ENCODE measurements at regions of chr1 and their contacts with region 1.

Region 1: DNA sequence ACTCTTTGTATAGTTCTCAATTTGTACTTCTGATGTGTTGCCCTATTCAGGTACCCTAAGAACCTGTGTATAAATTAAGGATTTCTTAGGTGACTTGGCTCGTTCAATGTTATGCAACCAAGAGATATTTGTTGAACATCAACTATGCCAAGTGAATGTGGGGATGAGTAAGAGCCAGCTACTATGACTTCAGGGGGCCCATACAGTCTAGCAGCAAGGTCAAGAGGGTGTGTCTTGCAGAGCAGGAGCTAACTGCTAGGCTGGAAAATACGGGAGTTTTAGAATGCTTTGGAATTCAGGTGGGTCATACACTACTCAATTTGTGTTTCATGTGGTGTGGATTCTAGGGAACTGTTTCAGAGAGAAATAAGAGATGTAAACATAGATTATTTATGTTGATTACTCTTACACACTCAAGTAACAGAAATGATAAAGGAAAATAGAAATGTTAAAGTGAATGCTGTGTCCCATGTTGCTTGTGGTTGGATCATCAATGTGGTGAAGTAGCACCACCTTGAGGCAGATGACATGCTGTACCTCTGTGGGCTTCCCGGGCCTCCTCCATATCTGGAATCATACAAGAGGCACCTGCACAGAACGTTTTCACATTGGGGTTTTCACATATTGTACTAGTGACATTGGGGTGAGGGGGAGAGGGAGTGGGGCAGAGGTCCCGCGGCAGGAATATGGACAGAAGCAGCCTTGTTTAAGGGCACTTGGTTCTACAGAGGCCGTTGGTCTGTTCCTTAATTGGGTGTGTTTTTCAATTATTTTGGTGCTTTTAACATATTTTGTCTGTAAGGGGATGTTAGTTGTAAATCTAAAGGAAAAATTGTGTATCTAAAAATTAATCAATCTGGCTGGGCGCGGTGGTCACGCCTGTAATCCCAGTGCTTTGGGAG is 12.4 kb downstream of the ARPC5 start:
- DNase-seq: no peak
- ATAC-seq: peak; percentile 94
- H3K4me3 ChIP-seq: no peak overlapping the region
- H3K27ac ChIP-seq: no peak overlapping the region
- H3K4me1 ChIP-seq: no peaks in the 10 kb centered on the region; the same call in 1 of the 2 replicates
- H3K27me3 ChIP-seq: no peaks in the 10 kb centered on the region
- CTCF ChIP-seq: peak; percentile 73 to 77 (median 77); a peak in 5 of 6 replicates
- EP300 ChIP-seq: no peak
- POLR2A ChIP-seq: peak; percentile 25; the same call in 1 of the 2 replicates
- RAD21 ChIP-seq: peak; percentile 86

Region 2: GRCh38 chr1:183281553-183282091 is 341.5 kb before region 1 on chr1:
- CTCF ChIA-PET with region 1: interaction called, 3 read pairs
- POLR2A ChIA-PET with region 1: interaction called, 3 read pairs
- RAD21 ChIA-PET with region 1: interaction called, 5 read pairs
- SMC1A ChIA-PET with region 1: no interaction called
- in situ Hi-C with region 1: no loop called
- intact Hi-C with region 1: loop called (anchors 1 kb)
- DNase-seq: peak; percentile 54
- ATAC-seq: peak; percentile 91
- H3K4me3 ChIP-seq: no peak overlapping the region
- H3K27ac ChIP-seq: no peak overlapping the region
- H3K4me1 ChIP-seq: peaks cover 3% of the 10 kb centered on the region; the same call in 1 of the 2 replicates
- H3K27me3 ChIP-seq: no peaks in the 10 kb centered on the region
- CTCF ChIP-seq: peak; percentile 85 to 93 (median 88)
- EP300 ChIP-seq: no peak
- POLR2A ChIP-seq: no peak
- RAD21 ChIP-seq: peak; percentile 88

Region 3: DNA sequence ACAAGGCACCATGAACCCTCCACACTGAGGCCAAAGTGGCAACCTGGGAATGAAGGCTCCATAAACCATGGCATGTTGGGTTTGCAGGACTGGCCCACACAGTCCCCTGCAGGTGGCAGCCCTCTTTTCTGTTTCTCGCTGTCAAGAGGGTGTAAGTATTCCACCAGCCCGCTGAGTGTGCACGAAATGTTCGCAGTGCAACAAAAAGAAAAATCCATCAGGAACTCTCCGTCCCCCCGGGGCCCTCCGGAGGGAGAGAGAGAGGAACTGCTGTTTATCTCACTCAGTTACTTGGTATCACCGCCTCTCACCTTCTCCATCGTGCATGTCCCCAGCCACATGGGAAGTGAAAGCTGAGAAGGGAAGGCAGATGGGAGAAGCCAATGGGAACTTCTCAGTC is 71.2 kb before region 1 on chr1:
- CTCF ChIA-PET with region 1: no interaction called
- POLR2A ChIA-PET with region 1: no interaction called
- RAD21 ChIA-PET with region 1: no interaction called
- SMC1A ChIA-PET with region 1: interaction called, 8 read pairs
- in situ Hi-C with region 1: no loop called
- intact Hi-C with region 1: loop called (anchors 2 kb)
- DNase-seq: no peak
- ATAC-seq: no peak
- H3K4me3 ChIP-seq: no peak overlapping the region
- H3K27ac ChIP-seq: no peak overlapping the region
- H3K4me1 ChIP-seq: no peaks in the 10 kb centered on the region; the same call in 1 of the 2 replicates
- H3K27me3 ChIP-seq: no peaks in the 10 kb centered on the region
- CTCF ChIP-seq: no peak
- EP300 ChIP-seq: no peak
- POLR2A ChIP-seq: no peak
- RAD21 ChIP-seq: no peak

Region 4: GRCh38 chr1:183590244-183591191 is 32.6 kb before region 1 on chr1 and contains the start of gene NCF2:
- CTCF ChIA-PET with region 1: interaction called, 10 read pairs
- POLR2A ChIA-PET with region 1: interaction called, 4 read pairs
- RAD21 ChIA-PET with region 1: interaction called, 15 read pairs
- SMC1A ChIA-PET with region 1: interaction called, 20 read pairs
- in situ Hi-C with region 1: no loop called
- intact Hi-C with region 1: no loop called
- DNase-seq: peak; percentile 96
- ATAC-seq: peak; percentile 79
- H3K4me3 ChIP-seq: peak within 1 kb of the TSS; percentile 73
- H3K27ac ChIP-seq: peak within 1 kb of the TSS; percentile 95
- H3K4me1 ChIP-seq: peaks cover 48% of the 10 kb centered on the region
- H3K27me3 ChIP-seq: no peaks in the 10 kb centered on the region
- CTCF ChIP-seq: no peak
- EP300 ChIP-seq: peak; percentile 74 to 93
- POLR2A ChIP-seq: peak; percentile 64
- RAD21 ChIP-seq: peak; percentile 46; the same call in 1 of the 2 replicates
- polyA plus RNA-seq, gene NCF2: 31.4 to 61.2 TPM

Region 5: DNA sequence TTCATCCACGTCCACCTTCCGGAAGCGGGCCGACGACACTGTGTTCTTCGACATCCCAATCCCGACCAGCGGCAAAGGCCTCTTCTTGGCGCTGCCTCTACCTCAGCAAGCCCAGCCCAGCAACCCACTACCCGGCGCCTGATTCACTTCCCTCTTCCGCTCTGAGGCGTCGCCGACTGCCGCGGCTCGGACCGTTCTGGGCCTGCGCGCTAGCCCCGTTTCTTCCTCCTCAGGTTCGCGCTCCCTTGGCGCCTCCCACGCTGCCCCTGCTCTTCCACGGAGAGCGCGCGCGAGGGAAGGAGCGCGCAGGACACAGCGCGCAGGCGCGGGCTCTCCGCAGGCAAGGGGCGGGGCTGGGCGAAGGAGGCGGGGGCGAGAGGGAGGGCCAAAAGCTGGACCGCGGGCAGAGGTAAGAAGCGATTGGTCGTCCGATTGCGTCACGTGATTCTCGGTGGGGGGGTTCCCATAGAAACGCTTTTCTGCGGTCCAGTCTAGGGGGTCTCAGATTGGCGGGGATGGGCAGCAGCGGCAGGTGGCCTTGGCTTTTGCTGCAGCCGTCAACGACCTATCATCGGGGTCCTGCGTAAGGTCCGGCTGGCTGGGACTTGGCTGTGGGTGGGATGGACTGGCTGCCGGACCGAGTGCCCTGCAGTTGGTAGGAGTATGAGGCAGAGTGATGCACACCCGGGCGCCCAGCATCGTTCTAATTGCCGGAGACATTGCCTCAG is 12.6 kb after region 1 on chr1 and contains the start of gene ARPC5:
- CTCF ChIA-PET with region 1: interaction called, 10 read pairs
- POLR2A ChIA-PET with region 1: interaction called, 5 read pairs
- RAD21 ChIA-PET with region 1: interaction called, 4 read pairs
- SMC1A ChIA-PET with region 1: interaction called, 10 read pairs
- in situ Hi-C with region 1: no loop called
- intact Hi-C with region 1: no loop called
- DNase-seq: peak; percentile 95
- ATAC-seq: peak; percentile 86
- H3K4me3 ChIP-seq: peak within 1 kb of the TSS; percentile 93
- H3K27ac ChIP-seq: peak within 1 kb of the TSS; percentile 96
- H3K4me1 ChIP-seq: 0 out of 2 replicates have a peak, but pooled peaks cover 3% of the 10 kb centered on the region
- H3K27me3 ChIP-seq: no peaks in the 10 kb centered on the region
- CTCF ChIP-seq: no peak
- EP300 ChIP-seq: no peak
- POLR2A ChIP-seq: peak; percentile 93
- RAD21 ChIP-seq: no peak
- polyA plus RNA-seq, gene ARPC5: 246 to 274 TPM

Measured in GM12878 (cell line).